PC-3 (cell line): ENCODE measurements at regions of chr5 and their contacts with region 1.

Region 1: GRCh38 chr5:14775857-14776256 is 95.7 kb downstream of the ANKH start:
- DNase-seq: peak; percentile 94
- ATAC-seq: peak; percentile 90
- H3K4me3 ChIP-seq: no peak overlapping the region
- H3K27ac ChIP-seq: peak overlapping the region; percentile 68
- H3K4me1 ChIP-seq: peaks cover 17% of the 10 kb centered on the region
- H3K27me3 ChIP-seq: no peaks in the 10 kb centered on the region
- CTCF ChIP-seq: no peak

Region 2: GRCh38 chr5:14727428-14727865 is 48.4 kb before region 1 on chr5:
- CTCF ChIA-PET with region 1: no interaction called
- POLR2A ChIA-PET with region 1: no interaction called
- intact Hi-C with region 1: no loop called
- DNase-seq: peak; percentile 92
- ATAC-seq: peak; percentile 81
- H3K4me3 ChIP-seq: no peak overlapping the region
- H3K27ac ChIP-seq: no peak overlapping the region
- H3K4me1 ChIP-seq: peaks cover 10% of the 10 kb centered on the region
- H3K27me3 ChIP-seq: no peaks in the 10 kb centered on the region
- CTCF ChIP-seq: peak; percentile 99

Region 3: GRCh38 chr5:14830210-14831005 is 54.6 kb after region 1 on chr5:
- CTCF ChIA-PET with region 1: no interaction called
- POLR2A ChIA-PET with region 1: no interaction called
- intact Hi-C with region 1: loop called (anchors 10 kb)
- DNase-seq: no peak
- ATAC-seq: no peak
- H3K4me3 ChIP-seq: no peak overlapping the region
- H3K27ac ChIP-seq: no peak overlapping the region
- H3K4me1 ChIP-seq: peaks cover 7% of the 10 kb centered on the region
- H3K27me3 ChIP-seq: no peaks in the 10 kb centered on the region
- CTCF ChIP-seq: no peak

Region 4: DNA sequence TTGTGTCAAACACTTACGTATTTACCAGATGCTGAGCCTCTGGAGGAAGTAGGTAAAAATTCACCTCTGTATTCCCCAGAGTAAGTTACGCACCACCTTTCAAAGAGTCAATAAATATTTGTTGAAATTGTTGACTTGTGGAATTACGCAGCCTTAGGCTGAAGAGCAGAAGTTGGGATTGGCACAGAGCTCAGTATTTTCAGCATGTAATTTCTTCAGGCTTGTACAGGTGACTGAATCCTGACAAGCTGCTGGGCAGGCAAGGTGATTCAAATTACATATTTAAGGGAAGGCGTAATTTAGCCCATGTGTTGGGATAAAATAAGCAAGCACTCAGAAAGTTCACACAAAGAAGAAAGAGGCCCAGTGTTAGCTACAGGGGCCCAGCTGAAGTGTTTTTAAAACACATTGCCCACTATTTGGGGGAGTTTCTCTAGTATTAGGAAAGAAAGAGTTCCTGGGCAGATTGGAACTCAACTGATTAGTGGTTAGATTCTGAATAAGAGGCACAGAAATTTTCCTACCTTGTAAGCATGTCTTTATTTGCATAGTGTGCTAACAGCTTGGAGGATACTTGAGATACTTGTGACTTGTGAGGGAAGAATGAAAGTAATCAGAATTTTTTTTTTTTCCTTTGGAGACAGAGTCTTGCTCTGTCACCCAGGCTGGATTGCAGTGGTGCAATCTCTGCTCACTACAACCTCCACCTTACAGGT is 558.9 kb after region 1 on chr5:
- CTCF ChIA-PET with region 1: no interaction called
- POLR2A ChIA-PET with region 1: no interaction called
- intact Hi-C with region 1: no loop called
- DNase-seq: no peak
- ATAC-seq: no peak
- H3K4me3 ChIP-seq: no peak overlapping the region
- H3K27ac ChIP-seq: no peak overlapping the region
- H3K4me1 ChIP-seq: no peaks in the 10 kb centered on the region
- H3K27me3 ChIP-seq: no peaks in the 10 kb centered on the region
- CTCF ChIP-seq: no peak